ENCODE measurements at regions of chr1 and their contacts with region 1.

Region 1: GRCh38 chr1:119885903-119886783 is 10.2 kb downstream of the ADAM30 start:
- DNase-seq: peak; percentile 78
- ATAC-seq: peak; percentile 68
- H3K4me3 Mint-ChIP-seq: no peak overlapping the region
- H3K27ac Mint-ChIP-seq: no peak overlapping the region
- H3K4me1 Mint-ChIP-seq: no peaks in the 10 kb centered on the region
- H3K27me3 Mint-ChIP-seq: peaks cover 3% of the 10 kb centered on the region

Region 2: GRCh38 chr1:119358636-119359035 is 527.5 kb before region 1 on chr1:
- CTCF ChIA-PET with region 1: no interaction called
- POLR2A ChIA-PET with region 1: no interaction called
- intact Hi-C with region 1: no loop called
- DNase-seq: no peak
- ATAC-seq: no peak
- H3K4me3 Mint-ChIP-seq: no peak overlapping the region
- H3K27ac Mint-ChIP-seq: no peak overlapping the region
- H3K4me1 Mint-ChIP-seq: no peaks in the 10 kb centered on the region
- H3K27me3 Mint-ChIP-seq: peaks cover 5% of the 10 kb centered on the region

Region 3: DNA sequence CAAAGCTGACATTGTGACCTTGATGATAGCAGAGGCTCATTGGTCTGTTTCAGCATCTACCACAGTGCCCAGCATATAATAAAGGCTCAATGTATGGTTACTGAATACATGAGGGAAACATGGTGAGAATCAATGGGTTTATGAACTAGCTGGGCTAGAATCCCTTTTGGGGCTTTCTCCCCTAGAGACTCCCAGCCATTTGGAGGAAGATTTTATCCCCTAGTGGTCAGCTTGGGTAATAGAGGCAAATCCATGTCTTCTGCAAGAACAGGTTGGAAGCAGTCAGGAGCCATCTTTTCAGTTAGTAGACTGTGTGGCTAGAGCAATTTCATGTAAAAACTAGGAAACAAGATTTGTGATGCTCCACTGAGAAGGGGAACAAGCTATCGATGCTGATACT is 59.1 kb before region 1 on chr1:
- CTCF ChIA-PET with region 1: no interaction called
- POLR2A ChIA-PET with region 1: no interaction called
- intact Hi-C with region 1: loop called in 1 of 2 experiments (anchors 5 kb)
- DNase-seq: no peak
- ATAC-seq: no peak
- H3K4me3 Mint-ChIP-seq: no peak overlapping the region
- H3K27ac Mint-ChIP-seq: no peak overlapping the region
- H3K4me1 Mint-ChIP-seq: no peaks in the 10 kb centered on the region
- H3K27me3 Mint-ChIP-seq: peaks cover 7% of the 10 kb centered on the region

Region 4: DNA sequence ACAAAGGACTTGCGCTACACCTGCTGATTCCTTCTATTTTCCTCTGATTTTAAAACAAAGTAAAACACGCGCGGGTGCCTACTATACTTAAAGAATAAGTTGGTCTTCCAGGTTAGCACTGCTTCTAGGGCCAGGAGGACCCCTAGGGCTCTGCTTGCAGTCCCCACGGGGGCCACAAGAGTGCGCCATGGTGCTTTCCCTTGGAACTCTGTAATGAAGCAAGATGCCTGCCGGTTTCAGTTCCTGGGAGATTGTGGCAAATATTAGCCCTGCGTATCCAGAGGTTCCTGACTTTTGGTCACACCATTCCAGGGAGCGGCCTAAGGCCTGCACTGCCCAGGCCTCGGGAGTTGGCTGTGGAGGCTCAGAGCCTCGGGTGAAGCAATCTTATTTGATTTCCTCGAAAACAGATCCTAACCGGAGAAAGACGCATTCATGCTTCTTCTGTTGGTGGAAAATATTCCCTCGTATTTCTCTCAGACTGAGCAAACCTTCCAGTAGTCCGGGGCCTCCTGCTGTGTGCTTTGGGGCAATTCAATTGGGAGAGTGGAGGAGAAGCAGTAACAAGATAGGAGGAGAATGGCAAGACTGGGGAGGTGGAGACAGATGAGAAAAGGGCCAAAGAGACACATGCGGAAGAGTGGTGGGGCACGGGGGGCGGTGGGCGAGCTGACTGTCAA is 15.1 kb before region 1 on chr1:
- CTCF ChIA-PET with region 1: interaction called, 15 read pairs
- POLR2A ChIA-PET with region 1: no interaction called
- intact Hi-C with region 1: loop called in 1 of 2 experiments (anchors 2 kb)
- DNase-seq: peak; percentile 81
- ATAC-seq: peak; percentile 47
- H3K4me3 Mint-ChIP-seq: no peak overlapping the region
- H3K27ac Mint-ChIP-seq: no peak overlapping the region
- H3K4me1 Mint-ChIP-seq: no peaks in the 10 kb centered on the region
- H3K27me3 Mint-ChIP-seq: peaks cover 18% of the 10 kb centered on the region

Region 5: DNA sequence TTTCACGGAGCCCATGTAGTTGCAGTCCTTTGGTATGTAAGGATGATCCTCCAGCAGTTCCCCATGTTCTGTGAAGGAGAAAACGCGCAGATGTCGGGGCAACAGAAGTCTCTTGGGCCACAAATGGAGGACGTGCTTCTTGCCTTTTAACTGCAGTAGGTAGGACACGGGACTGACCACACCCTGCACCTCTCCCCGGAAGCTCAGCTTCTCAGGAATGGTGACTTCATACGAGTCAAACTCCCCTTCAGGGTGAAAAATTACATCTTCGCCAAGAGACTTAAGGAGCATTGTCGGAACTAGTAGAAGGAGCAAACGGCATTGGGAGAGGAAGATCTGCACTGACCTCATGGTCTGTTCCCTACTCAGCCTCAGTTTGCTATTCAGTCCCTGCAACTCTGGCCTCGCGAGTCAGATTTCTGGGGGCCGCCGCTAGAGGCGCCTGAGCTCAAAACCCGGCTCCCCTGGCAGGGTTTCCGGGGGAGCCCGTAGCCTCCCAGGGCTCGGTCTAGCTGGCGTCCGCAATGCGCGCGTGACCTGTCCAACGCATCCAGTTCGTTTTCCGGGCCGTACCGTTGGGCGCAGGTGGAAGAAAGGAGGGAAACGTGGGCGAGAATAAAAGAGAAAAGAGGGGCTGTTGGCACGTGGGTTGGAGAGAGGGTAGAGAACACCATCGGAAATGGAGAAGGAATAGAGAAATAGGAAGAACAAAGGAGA is 10.0 kb after region 1 on chr1 and contains the start of gene ADAM30:
- CTCF ChIA-PET with region 1: interaction called, 3 read pairs
- POLR2A ChIA-PET with region 1: no interaction called
- intact Hi-C with region 1: loop called in 1 of 2 experiments (anchors 2 kb)
- DNase-seq: no peak
- ATAC-seq: no peak
- H3K4me3 Mint-ChIP-seq: no peak within 1 kb of the TSS
- H3K27ac Mint-ChIP-seq: no peak within 1 kb of the TSS
- H3K4me1 Mint-ChIP-seq: no peaks in the 10 kb centered on the region
- H3K27me3 Mint-ChIP-seq: peaks cover 3% of the 10 kb centered on the region
- total RNA-seq, gene ADAM30: not detected

Region 6: GRCh38 chr1:120176092-120176855 is 290.1 kb after region 1 on chr1 and contains the start of gene SEC22B:
- CTCF ChIA-PET with region 1: no interaction called
- POLR2A ChIA-PET with region 1: no interaction called
- intact Hi-C with region 1: no loop called
- DNase-seq: peak; percentile 92
- ATAC-seq: peak; percentile 100
- H3K4me3 Mint-ChIP-seq: peak within 1 kb of the TSS; percentile 98
- H3K27ac Mint-ChIP-seq: peak within 1 kb of the TSS; percentile 98
- H3K4me1 Mint-ChIP-seq: no peaks in the 10 kb centered on the region
- H3K27me3 Mint-ChIP-seq: no peaks in the 10 kb centered on the region
- total RNA-seq, gene SEC22B: 19.7 to 20.4 TPM